ENCODE measurements at regions of chr3 and their contacts with region 1.

Region 1: GRCh38 chr3:16264708-16265454 is at the starts of genes DPH3 and OXNAD1:
- DNase-seq: peak; percentile 98 to 99 (median 99)
- H3K4me3 ChIP-seq: peak within 1 kb of the TSS; percentile 83 to 98
- H3K4me3 Mint-ChIP-seq: peak within 1 kb of the TSS; percentile 98 to 100 (median 100)
- H3K27ac ChIP-seq: peak within 1 kb of the TSS; percentile 88
- H3K27ac Mint-ChIP-seq: peak within 1 kb of the TSS; percentile 97 to 100 (median 100)
- H3K4me1 ChIP-seq: peaks cover 33% of the 10 kb centered on the region
- H3K4me1 Mint-ChIP-seq: peaks cover 26 to 38% (median 30%) of the 10 kb centered on the region in 4 donors
- H3K27me3 ChIP-seq: no peaks in the 10 kb centered on the region
- H3K27me3 Mint-ChIP-seq: no peaks in the 10 kb centered on the region
- total RNA-seq, gene DPH3: 15.2 to 15.4 TPM
- total RNA-seq, gene OXNAD1: 78.5 to 84.7 TPM

Region 2: GRCh38 chr3:15205934-15206661 is 1058.8 kb before region 1 on chr3 and contains the start of gene CAPN7:
- CTCF ChIA-PET with region 1: interaction called, 4 read pairs
- POLR2A ChIA-PET with region 1: interaction called, 5 read pairs
- intact Hi-C with region 1: loop called (anchors 5 kb)
- DNase-seq: peak; percentile 92 to 95 (median 94)
- H3K4me3 ChIP-seq: peak within 1 kb of the TSS; percentile 70 to 83
- H3K4me3 Mint-ChIP-seq: peak within 1 kb of the TSS; percentile 91 to 96 (median 92)
- H3K27ac ChIP-seq: peak within 1 kb of the TSS; percentile 88
- H3K27ac Mint-ChIP-seq: peak within 1 kb of the TSS; percentile 77 to 97 (median 95)
- H3K4me1 ChIP-seq: peaks cover 46% of the 10 kb centered on the region
- H3K4me1 Mint-ChIP-seq: peaks cover 18 to 43% (median 29%) of the 10 kb centered on the region in 4 donors
- H3K27me3 ChIP-seq: no peaks in the 10 kb centered on the region
- H3K27me3 Mint-ChIP-seq: no peaks in the 10 kb centered on the region
- total RNA-seq, gene CAPN7: 95.5 to 103 TPM

Region 3: DNA sequence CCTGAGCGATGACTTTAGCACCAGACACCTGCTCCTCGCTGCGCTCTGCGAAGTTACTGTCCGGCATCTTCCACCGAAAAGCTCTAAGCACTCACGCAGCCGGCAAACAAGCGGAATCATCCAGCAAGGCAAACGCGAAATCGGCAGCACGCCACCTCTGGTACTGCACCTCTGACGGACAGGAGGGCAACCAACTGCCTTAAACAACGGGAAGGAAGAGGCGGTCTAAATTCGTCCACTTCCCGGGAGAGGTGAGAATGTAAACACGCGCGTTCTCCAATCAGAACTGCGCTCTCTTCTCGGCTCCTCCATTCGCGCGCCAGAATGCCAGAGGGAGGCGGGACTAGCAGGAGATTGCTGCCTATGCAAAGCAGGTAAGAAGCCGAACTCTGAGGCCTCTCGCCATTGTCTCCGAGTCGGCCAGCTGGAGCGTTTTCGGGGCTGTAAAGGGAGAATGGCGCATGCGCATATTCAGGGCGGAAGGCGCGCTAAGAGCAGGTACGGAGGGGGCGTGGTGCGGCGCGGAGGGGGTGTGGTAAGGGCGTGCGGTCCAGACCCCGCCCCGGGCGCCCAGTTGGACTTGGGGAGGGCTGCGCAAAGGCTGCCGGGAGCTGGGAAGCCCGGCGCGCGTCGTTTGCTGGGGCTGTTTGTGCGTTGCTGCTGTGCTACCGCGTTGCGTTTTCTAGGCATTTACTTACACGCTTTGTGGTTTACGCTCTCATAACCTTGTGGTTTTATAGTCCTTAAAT is 663.3 kb before region 1 on chr3 and contains the starts of genes BTD and HACL1:
- CTCF ChIA-PET with region 1: no interaction called
- POLR2A ChIA-PET with region 1: interaction called, 4 read pairs
- intact Hi-C with region 1: loop called (anchors 1 kb)
- DNase-seq: peak; percentile 98 to 100 (median 99)
- H3K4me3 ChIP-seq: peak within 1 kb of the TSS; percentile 65 to 100
- H3K4me3 Mint-ChIP-seq: peak within 1 kb of the TSS; percentile 97 to 100 (median 100)
- H3K27ac ChIP-seq: peak within 1 kb of the TSS; percentile 83
- H3K27ac Mint-ChIP-seq: peak within 1 kb of the TSS; percentile 94 to 100 (median 99)
- H3K4me1 ChIP-seq: peaks cover 37% of the 10 kb centered on the region
- H3K4me1 Mint-ChIP-seq: peaks cover 32 to 70% (median 50%) of the 10 kb centered on the region in 4 donors
- H3K27me3 ChIP-seq: no peaks in the 10 kb centered on the region
- H3K27me3 Mint-ChIP-seq: no peaks in the 10 kb centered on the region
- total RNA-seq, gene BTD: 23.5 to 27.4 TPM
- total RNA-seq, gene HACL1: 37.6 to 44.4 TPM

Region 4: GRCh38 chr3:16300881-16301359 is 36.0 kb after region 1 on chr3:
- CTCF ChIA-PET with region 1: interaction called, 12 read pairs
- POLR2A ChIA-PET with region 1: interaction called, 11 read pairs
- intact Hi-C with region 1: no loop called
- DNase-seq: peak; percentile 76 to 81 (median 77)
- H3K4me3 ChIP-seq: peak overlapping the region in 1 of 2 donors; percentile 50
- H3K4me3 Mint-ChIP-seq: peak overlapping the region; percentile 89 to 96 (median 90)
- H3K27ac ChIP-seq: peak overlapping the region; percentile 49
- H3K27ac Mint-ChIP-seq: peak overlapping the region; percentile 93 to 98 (median 96)
- H3K4me1 ChIP-seq: peaks cover 95% of the 10 kb centered on the region
- H3K4me1 Mint-ChIP-seq: peaks cover 81 to 99% (median 92%) of the 10 kb centered on the region in 4 donors
- H3K27me3 ChIP-seq: no peaks in the 10 kb centered on the region
- H3K27me3 Mint-ChIP-seq: no peaks in the 10 kb centered on the region

Region 5: DNA sequence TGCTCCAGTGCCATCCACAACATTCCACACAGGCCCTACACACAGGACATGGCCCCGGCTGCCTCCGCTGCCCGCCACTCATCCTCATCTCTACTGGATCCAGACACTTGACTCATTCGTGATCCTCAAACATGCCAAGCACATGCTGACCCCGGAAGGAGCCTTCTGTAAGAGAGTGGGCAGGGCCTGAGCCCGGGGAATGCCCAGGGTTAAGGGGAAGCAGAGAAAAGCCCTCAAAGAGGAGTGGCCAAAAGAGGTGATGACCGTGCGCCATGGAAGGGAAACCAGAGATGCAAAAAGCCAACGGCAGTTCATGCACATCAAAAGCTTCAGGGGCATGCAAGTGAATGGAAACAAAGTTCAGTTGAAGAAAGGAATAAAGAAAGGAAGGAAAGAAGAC is 202.5 kb after region 1 on chr3:
- CTCF ChIA-PET with region 1: no interaction called
- POLR2A ChIA-PET with region 1: no interaction called
- intact Hi-C with region 1: loop called (anchors 5 kb)
- DNase-seq: peak in 4 of 5 donors; percentile 16 to 76 (median 34)
- H3K4me3 ChIP-seq: no peak overlapping the region
- H3K4me3 Mint-ChIP-seq: peak overlapping the region in 7 of 8 donors; percentile 26 to 84 (median 71)
- H3K27ac ChIP-seq: no peak overlapping the region
- H3K27ac Mint-ChIP-seq: peak overlapping the region; percentile 73 to 98 (median 94)
- H3K4me1 ChIP-seq: peaks cover 43% of the 10 kb centered on the region
- H3K4me1 Mint-ChIP-seq: peaks cover 43 to 66% (median 57%) of the 10 kb centered on the region in 4 donors
- H3K27me3 ChIP-seq: no peaks in the 10 kb centered on the region
- H3K27me3 Mint-ChIP-seq: no peaks in the 10 kb centered on the region

Region 6: DNA sequence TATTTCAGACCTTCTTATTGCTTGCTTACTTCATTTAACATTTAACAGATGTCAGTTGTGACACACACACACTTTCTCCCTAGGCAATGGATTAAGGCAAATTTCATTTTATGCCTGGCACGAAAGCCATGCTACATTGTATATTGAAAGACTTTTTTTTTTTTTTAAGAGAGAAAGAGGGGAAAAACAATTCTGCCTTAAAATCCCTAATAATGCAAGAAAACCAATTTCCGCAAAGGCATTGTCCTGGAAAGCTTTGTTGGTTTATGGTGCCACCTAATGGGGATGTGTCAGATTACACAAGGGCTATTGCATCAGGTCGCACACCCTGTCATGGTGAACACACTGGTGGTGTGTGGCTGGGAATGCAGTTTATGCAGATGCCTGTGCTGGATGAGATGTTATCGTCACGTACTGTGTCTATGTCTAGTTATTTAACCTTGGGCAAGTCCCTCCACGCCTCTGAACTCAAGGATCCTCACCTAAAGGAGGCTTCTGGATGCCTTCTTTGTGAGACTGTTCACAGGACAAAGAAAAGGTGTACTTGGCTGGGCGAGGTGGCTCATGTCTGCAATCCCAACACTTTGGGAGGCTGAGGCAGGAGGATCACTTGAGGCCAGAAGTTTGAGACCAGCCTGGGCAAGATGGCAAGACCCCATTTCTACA is 285.9 kb after region 1 on chr3:
- CTCF ChIA-PET with region 1: interaction called, 97 read pairs
- POLR2A ChIA-PET with region 1: no interaction called
- intact Hi-C with region 1: loop called (anchors 1 kb)
- DNase-seq: peak; percentile 74 to 80 (median 78)
- H3K4me3 ChIP-seq: no peak overlapping the region
- H3K4me3 Mint-ChIP-seq: no peak overlapping the region
- H3K27ac ChIP-seq: no peak overlapping the region
- H3K27ac Mint-ChIP-seq: peak overlapping the region in 5 of 7 donors; percentile 11 to 84 (median 51)
- H3K4me1 ChIP-seq: no peaks in the 10 kb centered on the region
- H3K4me1 Mint-ChIP-seq: peaks cover 2 to 6% (median 3%) of the 10 kb centered on the region in 4 donors
- H3K27me3 ChIP-seq: no peaks in the 10 kb centered on the region
- H3K27me3 Mint-ChIP-seq: peaks cover 6 to 14% of the 10 kb centered on the region in 2 donors

Measured in CD4-positive, alpha-beta memory T cell (primary cell).